Heart left ventricle (tissue), 16 donors: ENCODE measurements at regions of chr11 and their contacts with region 1.

Region 1: DNA sequence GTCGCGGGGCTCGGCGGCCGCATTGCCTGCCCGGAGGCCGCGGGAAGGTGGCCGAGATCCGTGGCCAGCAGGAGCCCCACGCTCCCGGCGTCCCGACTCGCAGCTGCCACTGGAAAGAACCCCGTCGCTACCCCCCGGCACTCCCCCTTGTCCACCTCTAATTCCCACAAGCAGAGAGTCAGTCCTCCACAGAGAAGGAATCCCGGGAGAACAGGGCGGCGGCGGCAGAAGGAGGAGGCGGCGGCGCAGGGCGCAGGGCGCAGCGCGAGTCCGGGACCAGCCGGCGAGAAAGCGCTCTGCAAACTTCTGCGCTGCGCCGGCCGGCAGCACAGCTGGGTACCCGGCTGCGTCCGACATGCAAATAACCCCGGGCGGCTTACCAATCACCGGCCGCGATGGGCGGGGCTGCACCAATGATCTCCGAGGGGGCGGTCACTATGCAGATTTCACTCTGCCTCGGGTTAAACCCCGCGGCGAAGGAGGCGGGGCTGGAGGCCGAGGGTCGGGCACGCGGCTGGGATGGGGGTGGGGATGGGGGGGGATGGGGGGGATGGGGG is at the start of gene ABTB2:
- DNase-seq: peak; percentile 98 to 99 (median 98)
- ATAC-seq: peak; percentile 93 to 96 (median 95)
- H3K4me3 ChIP-seq: peak within 1 kb of the TSS; percentile 42 to 84 (median 64)
- H3K27ac ChIP-seq: peak within 1 kb of the TSS; percentile 62 to 89 (median 79)
- H3K4me1 ChIP-seq: peaks cover 0 to 44% (median 30%) of the 10 kb centered on the region in 12 donors
- H3K27me3 ChIP-seq: peaks cover 0 to 22% (median 6%) of the 10 kb centered on the region in 9 donors
- CTCF ChIP-seq: no peak
- POLR2A ChIP-seq: peak; percentile 76 to 99
- total RNA-seq, gene ABTB2: 9.0 to 26.3 (median 12.5) TPM

Region 2: GRCh38 chr11:33857933-33858371 is 499.8 kb before region 1 on chr11:
- intact Hi-C with region 1: loop called in 3 of 10 experiments (anchors 5 to 10 kb)
- DNase-seq: peak; percentile 70 to 85 (median 78)
- ATAC-seq: peak; percentile 77 to 91 (median 89)
- H3K4me3 ChIP-seq: no peak overlapping the region
- H3K27ac ChIP-seq: peak overlapping the region in 1 of 12 donors; percentile 15
- H3K4me1 ChIP-seq: peaks cover 0 to 8% (median 0%) of the 10 kb centered on the region in 12 donors
- H3K27me3 ChIP-seq: peaks cover 0 to 6% (median 0%) of the 10 kb centered on the region in 9 donors
- CTCF ChIP-seq: peak; percentile 87 to 98 (median 94)
- POLR2A ChIP-seq: no peak

Region 3: DNA sequence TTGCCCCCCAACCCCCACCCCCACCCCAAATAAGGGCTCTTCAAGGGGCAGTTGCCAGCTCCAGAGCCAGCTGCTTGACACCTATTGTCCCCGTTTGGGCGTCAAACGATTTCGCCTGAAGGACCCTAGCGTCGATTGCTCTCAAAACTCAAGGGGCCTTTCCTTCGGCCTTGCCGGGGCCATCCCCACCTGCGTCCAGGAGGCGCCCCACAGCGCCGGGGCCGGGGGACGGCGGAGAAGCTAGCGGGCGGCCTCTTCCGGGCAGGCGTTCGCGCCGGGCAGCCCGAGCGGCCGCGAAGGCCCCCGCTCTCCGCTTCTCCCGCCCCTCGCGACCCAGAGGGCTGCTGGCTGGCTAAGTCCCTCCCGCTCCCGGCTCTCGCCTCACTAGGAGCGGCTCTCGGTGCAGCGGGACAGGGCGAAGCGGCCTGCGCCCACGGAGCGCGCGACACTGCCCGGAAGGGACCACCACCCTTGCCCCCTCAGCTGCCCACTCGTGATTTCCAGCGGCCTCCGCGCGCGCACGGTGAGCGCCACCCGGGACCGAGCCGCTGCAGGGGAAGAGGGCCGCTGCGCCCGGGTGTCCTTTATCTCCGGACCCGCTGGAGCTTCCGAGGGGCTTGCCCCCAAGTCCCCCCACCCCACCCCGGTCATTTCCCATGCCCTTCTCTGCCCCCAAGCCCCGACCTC is 306.3 kb before region 1 on chr11 and contains the start of gene CAPRIN1:
- intact Hi-C with region 1: loop called in 2 of 10 experiments (anchors 2 to 5 kb)
- DNase-seq: peak; percentile 89 to 95 (median 92)
- ATAC-seq: peak; percentile 81 to 94 (median 90)
- H3K4me3 ChIP-seq: peak within 1 kb of the TSS; percentile 90 to 99 (median 94)
- H3K27ac ChIP-seq: peak within 1 kb of the TSS; percentile 96 to 100 (median 99)
- H3K4me1 ChIP-seq: peaks cover 0 to 45% (median 37%) of the 10 kb centered on the region in 12 donors
- H3K27me3 ChIP-seq: no peaks in the 10 kb centered on the region
- CTCF ChIP-seq: peak in 1 of 12 donors; percentile 14
- POLR2A ChIP-seq: peak in 1 of 2 donors; percentile 69
- total RNA-seq, gene CAPRIN1: 94.2 to 134 (median 114) TPM

Region 4: DNA sequence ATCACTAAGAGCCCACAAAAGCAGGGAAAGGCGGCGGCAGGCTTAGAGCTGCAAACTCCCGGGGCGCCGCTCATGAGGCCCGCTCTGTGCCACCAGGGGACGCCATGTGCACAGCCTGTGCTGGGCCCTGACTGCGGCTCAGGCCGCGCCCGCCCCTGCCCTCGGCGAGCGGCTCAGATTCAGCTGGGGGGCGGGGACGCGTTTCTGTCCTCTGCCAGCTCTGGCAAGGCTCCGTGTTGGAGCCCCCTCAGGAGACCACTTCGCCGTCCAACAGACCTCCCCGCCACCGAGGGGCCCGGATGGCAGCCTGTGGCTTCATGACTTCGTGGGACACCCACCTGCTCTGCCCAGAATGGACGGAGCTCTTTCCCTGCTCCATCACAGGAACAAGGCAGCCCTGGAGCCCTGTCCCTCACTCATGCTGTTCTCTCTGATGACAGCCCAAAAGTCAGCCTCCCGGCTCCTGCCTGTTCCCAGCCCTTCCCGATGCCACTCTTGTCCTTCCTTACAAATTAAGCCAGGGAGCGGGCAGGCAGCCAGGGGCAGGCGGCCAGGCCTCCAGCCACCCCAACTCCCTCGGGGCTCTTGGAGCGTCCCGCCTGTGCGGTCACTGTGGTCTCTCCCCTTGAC is 183.3 kb before region 1 on chr11:
- intact Hi-C with region 1: loop called (anchors 1 to 2 kb)
- DNase-seq: peak; percentile 82 to 93 (median 83)
- ATAC-seq: peak; percentile 94 to 99 (median 98)
- H3K4me3 ChIP-seq: peak overlapping the region in 10 of 12 donors; percentile 17 to 48 (median 32)
- H3K27ac ChIP-seq: peak overlapping the region in 1 of 12 donors; percentile 24
- H3K4me1 ChIP-seq: peaks cover 0 to 17% (median 11%) of the 10 kb centered on the region in 12 donors
- H3K27me3 ChIP-seq: no peaks in the 10 kb centered on the region
- CTCF ChIP-seq: peak; percentile 85 to 97 (median 93)
- POLR2A ChIP-seq: no peak

Region 5: DNA sequence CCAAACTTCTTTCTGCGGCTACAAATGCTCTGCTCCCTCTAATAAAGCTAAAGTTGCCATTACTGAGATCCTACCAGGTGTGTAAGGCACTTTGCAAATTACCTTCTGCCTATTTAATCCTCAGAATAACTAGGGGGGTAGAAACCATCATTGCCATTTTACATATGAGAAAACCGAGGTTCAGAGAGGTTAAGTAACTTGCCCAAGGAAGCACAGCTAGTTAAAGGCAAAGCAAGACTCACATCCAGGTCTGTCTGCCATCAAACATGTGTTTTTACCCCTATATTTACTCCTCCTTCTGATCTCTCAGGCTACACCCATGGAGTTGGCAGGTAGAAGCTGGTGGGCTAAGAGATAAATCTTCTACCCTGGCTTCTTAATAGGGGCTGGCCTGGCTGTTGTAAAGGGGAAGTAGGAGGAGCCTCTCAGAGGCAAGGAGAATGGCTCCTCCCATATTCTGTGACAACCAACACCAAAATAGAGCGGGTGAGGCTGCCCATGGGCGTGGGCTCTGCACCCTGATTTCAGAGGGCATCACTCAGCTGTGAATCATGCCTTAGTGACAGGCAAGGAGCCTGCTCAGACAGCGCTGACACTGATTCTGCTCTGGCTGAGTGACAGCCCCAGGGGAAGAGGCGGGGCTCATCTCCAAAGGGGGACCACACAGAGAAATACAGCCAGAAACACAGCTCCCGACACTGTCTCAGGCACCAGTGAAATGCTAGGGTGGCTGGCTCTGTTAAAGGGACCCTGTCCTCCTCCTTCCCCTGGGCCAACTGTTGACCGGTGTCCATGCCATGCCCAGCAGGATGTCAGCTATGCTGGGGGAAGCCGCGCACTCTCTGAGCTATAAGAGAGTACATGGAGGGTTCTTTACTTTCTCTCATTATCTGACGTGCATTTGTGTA is 106.8 kb before region 1 on chr11:
- intact Hi-C with region 1: loop called in 6 of 10 experiments (anchors 5 to 10 kb)
- DNase-seq: peak; percentile 50 to 78 (median 69)
- ATAC-seq: peak; percentile 86 to 96 (median 94)
- H3K4me3 ChIP-seq: peak overlapping the region in 8 of 12 donors; percentile 3 to 41 (median 32)
- H3K27ac ChIP-seq: peak overlapping the region in 8 of 12 donors; percentile 1 to 72 (median 57)
- H3K4me1 ChIP-seq: peaks cover 0 to 29% (median 14%) of the 10 kb centered on the region in 12 donors
- H3K27me3 ChIP-seq: no peaks in the 10 kb centered on the region
- CTCF ChIP-seq: no peak
- POLR2A ChIP-seq: no peak

Region 6: DNA sequence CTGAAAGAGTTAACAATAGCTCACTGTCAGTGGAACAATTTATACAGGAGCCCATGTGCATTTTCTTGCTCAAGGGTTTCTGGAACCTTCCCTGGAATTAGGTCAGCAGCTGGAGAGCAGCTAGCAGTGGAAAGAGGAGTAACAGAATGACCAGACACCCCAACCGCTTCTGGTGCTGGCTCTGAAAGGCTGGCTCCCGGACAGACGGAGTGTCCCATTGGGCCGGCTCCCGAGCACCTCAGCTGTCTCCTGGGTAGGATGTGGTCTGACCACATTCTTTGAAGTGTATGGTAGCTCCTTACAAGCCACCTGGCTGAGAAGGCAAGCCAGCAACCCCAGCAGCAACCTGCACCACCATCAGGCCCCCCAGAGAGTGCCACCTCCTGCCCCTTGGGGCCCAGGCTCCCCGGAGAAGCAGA is 44.7 kb before region 1 on chr11:
- intact Hi-C with region 1: loop called in 3 of 10 experiments (anchors 1 to 5 kb)
- DNase-seq: peak in 4 of 5 donors; percentile 30 to 67 (median 54)
- ATAC-seq: peak in 3 of 4 donors; percentile 32 to 55 (median 46)
- H3K4me3 ChIP-seq: no peak overlapping the region
- H3K27ac ChIP-seq: peak overlapping the region in 6 of 12 donors; percentile 2 to 70 (median 32)
- H3K4me1 ChIP-seq: peaks cover 0 to 79% (median 32%) of the 10 kb centered on the region in 12 donors
- H3K27me3 ChIP-seq: no peaks in the 10 kb centered on the region
- CTCF ChIP-seq: no peak
- POLR2A ChIP-seq: no peak